Dendritic cell treated with granulocyte-macrophage colony-stimulating factor and Interleukin-4, amounts not matched to agents 40 ng/mL and 50 ng/mL, for 4 days (primary cell): ENCODE measurements at regions of chr17 and their contacts with region 1.

Region 1: DNA sequence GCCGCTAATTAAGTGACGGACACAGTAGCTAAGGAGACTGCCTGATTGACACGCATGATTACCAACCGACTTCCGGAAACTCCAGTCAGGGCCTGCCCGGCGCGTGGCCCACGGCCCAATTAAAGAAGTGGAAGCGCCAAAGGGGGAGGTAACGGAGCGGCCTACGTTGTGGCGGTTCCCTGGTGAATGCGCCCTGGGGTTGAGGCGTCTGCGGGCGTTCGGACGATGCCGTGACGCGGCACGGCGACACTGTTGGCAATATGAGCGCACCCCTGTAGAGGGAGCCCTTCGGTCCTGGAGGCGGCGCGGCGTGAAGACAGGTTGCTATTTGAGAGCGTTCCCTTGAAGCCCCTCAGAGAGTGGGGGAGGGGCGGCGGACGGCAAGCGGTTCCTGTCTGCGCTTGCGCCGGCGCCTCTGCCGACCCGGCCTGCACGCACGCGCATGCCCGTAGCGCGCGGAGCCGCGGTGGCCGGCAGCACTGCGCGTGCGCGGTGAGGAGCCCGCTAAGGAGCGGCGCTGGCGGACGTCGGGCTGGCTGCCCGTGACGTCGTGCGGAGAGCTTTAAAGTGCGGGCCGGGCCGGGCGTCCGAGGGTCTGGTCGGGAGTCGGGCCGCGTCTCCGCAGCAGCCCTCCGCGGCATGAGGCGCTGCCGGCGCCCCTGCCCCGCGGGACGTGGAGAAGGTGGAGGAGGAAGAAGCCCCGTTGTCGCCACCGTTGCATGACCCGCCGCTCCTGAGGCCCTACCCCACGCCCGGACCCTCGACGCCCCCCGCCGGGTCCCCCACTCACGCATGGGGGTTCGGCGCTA is at the start of gene ALKBH5:
- H3K4me3 Mint-ChIP-seq: peak within 1 kb of the TSS; percentile 90
- H3K27ac Mint-ChIP-seq: peak within 1 kb of the TSS; percentile 98
- H3K4me1 Mint-ChIP-seq: peaks cover 69% of the 10 kb centered on the region
- H3K27me3 Mint-ChIP-seq: no peaks in the 10 kb centered on the region

Region 2: GRCh38 chr17:18141210-18141803 is 42.2 kb before region 1 on chr17:
- intact Hi-C with region 1: loop called (anchors 5 kb)
- H3K4me3 Mint-ChIP-seq: no peak overlapping the region
- H3K27ac Mint-ChIP-seq: no peak overlapping the region
- H3K4me1 Mint-ChIP-seq: peaks cover 13% of the 10 kb centered on the region
- H3K27me3 Mint-ChIP-seq: peaks cover 33% of the 10 kb centered on the region

Region 3: DNA sequence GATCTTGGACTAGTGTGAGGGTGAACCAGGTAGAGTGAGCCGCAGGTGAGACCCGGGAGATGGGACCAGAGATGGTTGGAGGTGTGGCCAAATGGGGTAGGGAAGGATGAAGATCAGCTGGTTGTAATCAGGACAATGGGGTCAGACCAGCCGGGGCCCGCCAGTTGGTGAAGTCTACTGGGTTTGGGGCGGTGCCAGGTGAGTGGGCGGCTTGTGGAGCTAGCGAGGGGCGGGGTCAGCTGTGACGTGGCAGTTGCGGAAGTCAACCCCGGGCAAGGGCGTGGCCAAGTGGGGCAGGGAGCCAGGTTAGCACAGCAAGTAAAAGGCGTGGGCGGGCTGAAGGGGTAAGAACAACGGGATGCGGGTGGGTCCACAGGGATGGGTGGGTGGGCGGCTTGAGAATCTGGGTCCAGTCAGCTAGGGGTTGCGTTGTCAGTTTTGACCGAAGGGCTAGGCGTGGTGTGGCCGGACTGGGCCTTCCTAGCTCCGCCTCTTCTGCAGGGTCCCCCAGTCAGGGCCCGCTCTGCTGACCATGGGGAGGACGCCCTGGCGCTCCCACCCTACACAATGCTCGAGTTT is 25.4 kb before region 1 on chr17:
- intact Hi-C with region 1: loop called (anchors 1 kb)
- H3K4me3 Mint-ChIP-seq: peak overlapping the region; percentile 74
- H3K27ac Mint-ChIP-seq: peak overlapping the region; percentile 87
- H3K4me1 Mint-ChIP-seq: peaks cover 63% of the 10 kb centered on the region
- H3K27me3 Mint-ChIP-seq: no peaks in the 10 kb centered on the region

Region 4: DNA sequence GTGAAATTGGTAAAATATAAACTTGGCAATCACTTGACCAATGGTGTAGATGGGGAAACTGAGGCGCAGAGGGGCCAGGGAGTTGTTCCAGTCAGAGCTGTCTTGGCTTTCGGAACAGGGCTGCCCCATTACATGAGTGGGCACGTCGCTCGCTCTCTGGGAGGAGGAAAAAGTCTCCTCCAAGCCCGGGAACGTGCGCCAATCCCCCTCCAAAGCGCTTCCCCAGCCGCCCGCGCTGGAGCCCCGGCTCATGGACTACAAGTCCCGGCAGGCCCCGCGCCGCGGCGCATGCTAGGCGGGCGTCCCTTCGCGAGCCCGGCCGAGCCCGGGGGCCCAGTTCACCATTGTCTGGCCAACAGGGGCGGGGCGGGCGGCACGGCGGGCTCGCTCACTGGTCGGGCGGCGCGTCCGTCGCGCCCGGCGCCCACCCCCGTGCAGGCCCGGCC is 41.6 kb after region 1 on chr17:
- intact Hi-C with region 1: no loop called
- H3K4me3 Mint-ChIP-seq: peak overlapping the region; percentile 67
- H3K27ac Mint-ChIP-seq: peak overlapping the region; percentile 45
- H3K4me1 Mint-ChIP-seq: peaks cover 37% of the 10 kb centered on the region
- H3K27me3 Mint-ChIP-seq: peaks cover 5% of the 10 kb centered on the region

Region 5: DNA sequence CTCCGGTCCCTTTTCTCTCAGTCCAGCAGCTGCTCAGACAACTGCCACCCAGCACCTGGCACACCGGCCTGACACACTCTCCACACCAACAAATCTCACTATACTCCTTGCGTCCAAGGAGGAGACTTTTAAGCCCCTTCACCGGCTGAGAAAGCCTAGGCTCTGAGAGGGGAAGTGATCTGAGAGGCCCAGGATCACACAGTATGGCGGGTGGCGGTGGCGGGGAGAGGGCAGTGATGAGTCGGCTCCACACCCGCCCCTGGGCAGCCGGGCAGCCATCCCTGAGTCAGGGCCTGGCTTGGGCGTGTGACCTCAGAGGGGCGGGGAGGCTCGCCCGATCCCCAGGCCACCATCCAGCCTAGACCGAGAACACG is 74.4 kb after region 1 on chr17:
- intact Hi-C with region 1: loop called (anchors 2 kb)
- H3K4me3 Mint-ChIP-seq: peak overlapping the region; percentile 95
- H3K27ac Mint-ChIP-seq: peak overlapping the region; percentile 91
- H3K4me1 Mint-ChIP-seq: peaks cover 51% of the 10 kb centered on the region
- H3K27me3 Mint-ChIP-seq: no peaks in the 10 kb centered on the region